Natural killer cell (primary cell): ENCODE measurements at regions of chr12 and their contacts with region 1.

Region 1: DNA sequence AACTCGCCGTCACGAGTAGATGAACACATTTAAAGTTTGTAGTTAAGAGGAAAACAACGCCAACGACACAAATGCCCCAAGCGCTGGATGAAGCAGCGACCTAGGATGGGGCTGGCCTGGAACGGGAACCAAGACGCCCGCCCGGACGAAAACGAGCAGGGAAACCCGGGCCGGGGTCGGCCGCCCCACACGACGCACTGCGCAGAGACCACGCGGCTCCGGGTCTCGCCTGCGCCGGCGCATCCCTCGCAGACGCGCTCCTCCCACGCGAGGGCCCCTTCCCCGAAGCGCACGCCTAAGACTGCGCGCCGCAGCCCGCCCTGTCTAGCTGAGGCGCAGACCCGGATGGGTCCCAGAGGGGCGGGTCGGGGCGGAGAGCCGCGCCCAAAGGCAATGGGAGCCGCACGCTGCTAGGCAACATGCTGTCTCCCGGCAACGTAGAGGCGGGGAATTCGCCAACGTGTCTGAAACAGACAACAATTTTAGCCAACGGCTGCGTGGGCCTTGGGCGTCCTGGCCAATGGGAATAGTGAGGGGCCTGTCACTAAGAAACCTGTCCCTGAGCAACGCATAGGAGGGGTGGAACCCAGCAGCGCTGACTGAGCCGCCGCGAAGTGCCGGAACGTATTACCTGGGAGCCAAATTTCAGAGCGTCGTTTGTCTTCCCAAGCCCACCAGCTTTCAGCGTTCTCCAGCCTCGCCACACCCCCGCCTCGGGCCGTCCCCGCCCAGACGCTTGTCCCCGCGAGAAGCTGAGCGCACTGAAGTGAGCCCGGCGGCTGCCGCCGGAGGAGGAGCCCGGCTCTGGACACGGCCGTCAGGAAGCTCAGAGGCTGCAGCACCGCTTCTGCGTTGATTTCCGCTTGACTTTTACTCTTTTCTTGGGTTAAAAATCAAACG is 21.0 kb upstream of the CHFR start:
- DNase-seq: peak; percentile 88 to 98
- ATAC-seq: peak; percentile 86 to 93 (median 90)
- H3K4me3 ChIP-seq: peak overlapping the region; percentile 68
- H3K4me3 Mint-ChIP-seq: peak overlapping the region; percentile 85
- H3K27ac ChIP-seq: peak overlapping the region; percentile 89
- H3K27ac Mint-ChIP-seq: peak overlapping the region; percentile 83 to 96
- H3K4me1 ChIP-seq: peaks cover 22% of the 10 kb centered on the region
- H3K4me1 Mint-ChIP-seq: peaks cover 0 to 14% of the 10 kb centered on the region in 2 donors
- H3K27me3 ChIP-seq: peaks cover 8% of the 10 kb centered on the region
- H3K27me3 Mint-ChIP-seq: peaks cover 0 to 10% of the 10 kb centered on the region in 2 donors
- CTCF ChIP-seq: no peak

Region 2: GRCh38 chr12:132771126-132771838 is 137.1 kb before region 1 on chr12:
- intact Hi-C with region 1: loop called (anchors 2 kb)
- DNase-seq: peak in 1 of 2 donors; percentile 81
- ATAC-seq: peak in 1 of 3 donors; percentile 45
- H3K4me3 ChIP-seq: no peak overlapping the region
- H3K4me3 Mint-ChIP-seq: no peak overlapping the region
- H3K27ac ChIP-seq: peak overlapping the region; percentile 48
- H3K27ac Mint-ChIP-seq: peak overlapping the region in 1 of 2 donors; percentile 51
- H3K4me1 ChIP-seq: peaks cover 44% of the 10 kb centered on the region
- H3K4me1 Mint-ChIP-seq: peaks cover 14 to 17% of the 10 kb centered on the region in 2 donors
- H3K27me3 ChIP-seq: no peaks in the 10 kb centered on the region
- H3K27me3 Mint-ChIP-seq: no peaks in the 10 kb centered on the region
- CTCF ChIP-seq: no peak

Region 3: GRCh38 chr12:132858718-132859266 is 49.6 kb before region 1 on chr12:
- intact Hi-C with region 1: no loop called
- DNase-seq: no peak
- ATAC-seq: no peak
- H3K4me3 ChIP-seq: no peak overlapping the region
- H3K4me3 Mint-ChIP-seq: no peak overlapping the region
- H3K27ac ChIP-seq: no peak overlapping the region
- H3K27ac Mint-ChIP-seq: no peak overlapping the region
- H3K4me1 ChIP-seq: no peaks in the 10 kb centered on the region
- H3K4me1 Mint-ChIP-seq: no peaks in the 10 kb centered on the region
- H3K27me3 ChIP-seq: no peaks in the 10 kb centered on the region
- H3K27me3 Mint-ChIP-seq: no peaks in the 10 kb centered on the region
- CTCF ChIP-seq: no peak

Region 4: DNA sequence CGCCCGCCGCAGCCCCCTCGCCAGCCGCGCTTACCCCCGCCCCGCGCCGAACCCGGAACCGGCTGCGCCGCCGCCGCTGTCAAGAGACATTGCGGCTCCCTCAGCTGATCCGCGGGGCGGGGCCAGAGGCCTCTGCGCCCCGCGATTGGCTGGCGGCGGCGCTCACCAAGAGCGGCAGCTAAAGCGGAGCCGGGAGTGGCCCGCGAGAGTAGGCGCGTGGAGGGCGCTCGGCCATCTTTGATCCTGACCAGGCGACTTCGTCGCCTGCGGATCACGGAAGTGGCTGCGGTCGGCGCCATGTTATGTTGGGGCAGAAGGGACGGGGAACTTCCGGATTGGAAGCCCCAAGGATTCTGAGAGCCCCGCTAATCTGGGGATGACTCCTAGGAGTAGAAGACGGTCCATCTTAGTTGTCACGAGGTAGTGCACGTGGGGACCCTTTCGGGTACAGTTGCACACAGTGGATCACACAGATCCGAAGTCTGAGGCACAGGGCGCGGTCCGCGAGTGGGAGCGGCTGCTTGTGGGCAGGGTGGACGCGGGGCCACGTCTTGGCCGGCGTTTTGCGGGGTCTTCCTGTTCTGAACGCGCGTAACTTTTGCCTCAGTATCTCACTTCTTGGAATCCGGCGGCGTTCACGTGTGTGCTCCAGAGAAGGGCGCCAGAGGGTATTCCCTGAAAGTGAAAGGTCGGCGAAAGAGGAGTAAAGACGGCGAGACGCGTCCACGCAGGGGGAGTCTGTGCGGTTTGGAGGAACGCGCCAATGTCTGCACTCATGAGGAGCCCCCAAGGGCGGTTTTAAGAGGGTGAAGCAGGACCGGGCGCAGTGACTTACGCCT is 20.7 kb before region 1 on chr12 and contains the start of gene CHFR:
- intact Hi-C with region 1: loop called (anchors 1 kb)
- DNase-seq: peak; percentile 92 to 97
- ATAC-seq: peak; percentile 97 to 100 (median 97)
- H3K4me3 ChIP-seq: peak within 1 kb of the TSS; percentile 91
- H3K4me3 Mint-ChIP-seq: peak within 1 kb of the TSS; percentile 98
- H3K27ac ChIP-seq: peak within 1 kb of the TSS; percentile 99
- H3K27ac Mint-ChIP-seq: peak within 1 kb of the TSS; percentile 100
- H3K4me1 ChIP-seq: peaks cover 12% of the 10 kb centered on the region
- H3K4me1 Mint-ChIP-seq: peaks cover 16 to 22% of the 10 kb centered on the region in 2 donors
- H3K27me3 ChIP-seq: no peaks in the 10 kb centered on the region
- H3K27me3 Mint-ChIP-seq: peaks cover 8 to 10% of the 10 kb centered on the region in 2 donors
- CTCF ChIP-seq: no peak
- total RNA-seq, gene CHFR: 161 to 170 (median 168) TPM

Region 5: GRCh38 chr12:132956011-132956788 is 47.8 kb after region 1 on chr12 and contains the start of gene ZNF605:
- intact Hi-C with region 1: loop called (anchors 2 kb)
- DNase-seq: peak; percentile 85 to 94
- ATAC-seq: peak; percentile 94 to 97 (median 95)
- H3K4me3 ChIP-seq: peak within 1 kb of the TSS; percentile 92
- H3K4me3 Mint-ChIP-seq: peak within 1 kb of the TSS; percentile 90
- H3K27ac ChIP-seq: peak within 1 kb of the TSS; percentile 77
- H3K27ac Mint-ChIP-seq: peak within 1 kb of the TSS; percentile 87 to 94
- H3K4me1 ChIP-seq: peaks cover 27% of the 10 kb centered on the region
- H3K4me1 Mint-ChIP-seq: peaks cover 15 to 39% of the 10 kb centered on the region in 2 donors
- H3K27me3 ChIP-seq: no peaks in the 10 kb centered on the region
- H3K27me3 Mint-ChIP-seq: no peaks in the 10 kb centered on the region
- CTCF ChIP-seq: no peak
- total RNA-seq, gene ZNF605: 6.0 to 15.8 (median 7.6) TPM

Region 6: DNA sequence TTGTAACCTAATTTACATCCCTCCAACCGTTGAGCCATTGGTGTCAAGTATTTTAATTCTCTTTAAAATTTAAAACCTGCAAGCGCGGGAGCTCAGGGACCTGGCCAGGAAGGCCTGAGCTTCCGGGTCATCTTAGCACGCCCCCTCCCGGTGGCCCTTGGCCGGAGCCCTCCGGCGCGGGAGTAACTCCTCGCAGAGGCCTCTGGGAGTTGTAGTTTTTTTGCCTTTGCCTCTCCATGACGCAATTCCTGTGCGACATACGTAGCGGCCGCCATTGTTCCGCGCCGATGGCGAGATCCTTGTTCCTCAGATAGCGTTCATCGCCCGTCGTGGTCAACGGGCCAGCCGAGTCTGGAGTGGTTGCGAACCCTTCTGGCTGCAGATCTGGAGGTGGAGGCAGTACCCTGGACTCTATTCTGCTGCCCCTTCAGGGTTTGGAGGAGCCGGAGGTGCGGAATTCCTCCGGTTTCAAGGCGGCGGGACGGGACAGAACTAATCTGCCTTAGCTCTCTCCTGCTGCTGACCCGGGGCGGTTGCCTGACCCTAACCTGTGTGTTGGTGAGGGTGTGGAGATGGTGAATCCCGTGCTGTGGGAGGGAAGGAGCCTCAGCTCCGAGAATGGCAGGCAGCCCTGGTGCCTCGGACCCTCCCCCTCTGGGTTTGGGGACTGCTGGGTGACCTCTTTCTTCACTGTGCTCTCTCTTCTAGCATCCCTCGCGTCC is 273.0 kb after region 1 on chr12 and contains the start of gene ZNF268:
- intact Hi-C with region 1: loop called (anchors 1 kb)
- DNase-seq: peak; percentile 90 to 93
- ATAC-seq: peak; percentile 96
- H3K4me3 ChIP-seq: peak within 1 kb of the TSS; percentile 71
- H3K4me3 Mint-ChIP-seq: peak within 1 kb of the TSS; percentile 96
- H3K27ac ChIP-seq: peak within 1 kb of the TSS; percentile 75
- H3K27ac Mint-ChIP-seq: peak within 1 kb of the TSS; percentile 92 to 96
- H3K4me1 ChIP-seq: peaks cover 9% of the 10 kb centered on the region
- H3K4me1 Mint-ChIP-seq: peaks cover 27 to 38% of the 10 kb centered on the region in 2 donors
- H3K27me3 ChIP-seq: no peaks in the 10 kb centered on the region
- H3K27me3 Mint-ChIP-seq: peaks cover 5 to 8% of the 10 kb centered on the region in 2 donors
- CTCF ChIP-seq: peak; percentile 72
- total RNA-seq, gene ZNF268: 12.7 to 17.5 (median 14.3) TPM